ENCODE measurements at regions of chr1 and their contacts with region 1.

Region 1: GRCh38 chr1:205711104-205712020 is 31.1 kb upstream of the SLC45A3 start:
- DNase-seq: peak; percentile 93
- H3K4me3 Mint-ChIP-seq: no peak overlapping the region
- H3K27ac Mint-ChIP-seq: no peak overlapping the region
- H3K4me1 Mint-ChIP-seq: peaks cover 30% of the 10 kb centered on the region
- H3K27me3 Mint-ChIP-seq: no peaks in the 10 kb centered on the region
- CTCF ChIP-seq: peak; percentile 97

Region 2: DNA sequence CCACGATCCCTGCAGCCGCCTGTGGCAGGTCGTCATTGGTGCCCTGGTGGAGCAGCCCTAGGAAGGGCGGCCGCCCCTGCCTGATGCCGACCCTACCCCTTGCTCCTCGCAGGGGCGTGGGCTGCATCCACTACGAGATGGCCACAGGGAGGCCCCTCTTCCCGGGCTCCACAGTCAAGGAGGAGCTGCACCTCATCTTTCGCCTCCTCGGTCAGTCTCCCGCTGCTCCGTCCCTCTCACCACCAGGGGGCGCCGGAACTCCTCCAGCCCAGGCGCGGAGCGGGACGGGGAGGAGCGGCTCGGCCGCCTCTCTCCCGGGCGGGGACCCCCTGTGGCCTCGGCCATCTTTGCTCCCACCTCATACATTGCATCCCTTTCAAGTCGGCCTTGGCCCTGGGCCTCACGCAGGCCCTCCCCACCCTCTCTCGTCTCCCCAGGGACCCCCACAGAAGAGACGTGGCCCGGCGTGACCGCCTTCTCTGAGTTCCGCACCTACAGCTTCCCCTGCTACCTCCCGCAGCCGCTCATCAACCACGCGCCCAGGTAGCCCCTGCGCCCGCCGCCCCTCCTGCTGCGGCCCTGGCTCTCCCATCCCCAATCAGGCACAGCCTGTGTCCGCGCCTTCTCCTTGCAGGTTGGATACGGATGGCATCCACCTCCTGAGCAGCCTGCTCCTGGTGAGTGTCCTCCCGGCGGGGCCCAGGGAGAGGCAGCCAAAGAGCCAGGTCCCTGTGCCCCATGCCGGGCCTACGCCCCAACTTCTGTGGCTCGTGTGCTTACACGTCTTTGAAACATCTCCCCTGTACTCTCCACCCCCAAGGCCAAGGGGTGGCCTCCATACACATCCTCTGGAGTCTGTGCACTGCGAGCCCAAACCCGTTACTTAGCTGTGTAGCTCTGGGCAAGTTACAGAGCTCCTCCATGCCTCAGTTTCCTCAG is 182.2 kb before region 1 on chr1:
- CTCF ChIA-PET with region 1: interaction called, 26 read pairs
- POLR2A ChIA-PET with region 1: no interaction called
- intact Hi-C with region 1: loop called (anchors 2 kb)
- DNase-seq: peak; percentile 89
- H3K4me3 Mint-ChIP-seq: peak overlapping the region; percentile 32
- H3K27ac Mint-ChIP-seq: no peak overlapping the region
- H3K4me1 Mint-ChIP-seq: peaks cover 6% of the 10 kb centered on the region
- H3K27me3 Mint-ChIP-seq: no peaks in the 10 kb centered on the region
- CTCF ChIP-seq: peak; percentile 100

Region 3: GRCh38 chr1:205668951-205669340 is 42.4 kb before region 1 on chr1:
- CTCF ChIA-PET with region 1: interaction called, 592 read pairs
- POLR2A ChIA-PET with region 1: interaction called, 8 read pairs
- intact Hi-C with region 1: no loop called
- DNase-seq: no peak
- H3K4me3 Mint-ChIP-seq: no peak overlapping the region
- H3K27ac Mint-ChIP-seq: no peak overlapping the region
- H3K4me1 Mint-ChIP-seq: peaks cover 28% of the 10 kb centered on the region
- H3K27me3 Mint-ChIP-seq: no peaks in the 10 kb centered on the region
- CTCF ChIP-seq: no peak

Region 4: GRCh38 chr1:205693421-205693991 is 17.9 kb before region 1 on chr1:
- CTCF ChIA-PET with region 1: interaction called, 129 read pairs
- POLR2A ChIA-PET with region 1: interaction called, 6 read pairs
- intact Hi-C with region 1: no loop called
- DNase-seq: no peak
- H3K4me3 Mint-ChIP-seq: no peak overlapping the region
- H3K27ac Mint-ChIP-seq: no peak overlapping the region
- H3K4me1 Mint-ChIP-seq: peaks cover 8% of the 10 kb centered on the region
- H3K27me3 Mint-ChIP-seq: peaks cover 14% of the 10 kb centered on the region
- CTCF ChIP-seq: no peak

Region 5: DNA sequence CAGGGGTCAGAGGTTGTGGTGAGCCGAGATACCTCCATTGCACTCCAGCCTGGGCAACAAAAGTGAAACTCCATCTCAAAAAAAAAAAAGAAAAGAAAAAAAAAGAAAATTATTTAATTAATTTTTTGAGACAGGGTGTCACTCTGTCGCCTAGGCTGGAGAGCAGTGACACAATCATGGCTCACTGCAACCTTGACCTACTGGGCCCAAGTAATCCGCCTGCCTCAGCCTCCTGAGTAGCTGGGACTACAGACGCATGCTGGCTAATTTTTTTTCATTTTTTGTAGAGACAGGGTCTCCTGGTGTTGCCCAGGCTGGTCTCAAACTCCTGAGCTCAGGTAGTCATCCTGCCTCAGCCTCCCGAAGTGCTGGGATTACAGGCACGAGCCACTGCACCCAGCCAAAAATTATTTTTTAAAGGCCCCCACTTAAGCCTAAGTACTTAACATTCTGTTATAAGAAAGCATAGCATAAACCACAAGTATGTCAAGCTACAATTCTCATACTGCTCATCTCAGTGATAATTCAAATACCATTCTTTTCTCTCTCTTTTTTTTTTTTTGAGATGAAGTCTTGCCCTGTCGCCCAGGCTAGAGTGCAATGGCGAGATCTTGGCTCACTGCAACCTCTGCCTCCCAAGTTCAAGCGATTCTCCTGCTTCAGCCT is 18.7 kb after region 1 on chr1:
- CTCF ChIA-PET with region 1: interaction called, 141 read pairs
- POLR2A ChIA-PET with region 1: interaction called, 148 read pairs
- intact Hi-C with region 1: no loop called
- DNase-seq: no peak
- H3K4me3 Mint-ChIP-seq: no peak overlapping the region
- H3K27ac Mint-ChIP-seq: no peak overlapping the region
- H3K4me1 Mint-ChIP-seq: peaks cover 12% of the 10 kb centered on the region
- H3K27me3 Mint-ChIP-seq: no peaks in the 10 kb centered on the region
- CTCF ChIP-seq: no peak

Region 6: GRCh38 chr1:205750138-205751035 is 39.0 kb after region 1 on chr1 and contains the start of gene NUCKS1:
- CTCF ChIA-PET with region 1: interaction called, 11 read pairs
- POLR2A ChIA-PET with region 1: interaction called, 17 read pairs
- intact Hi-C with region 1: no loop called
- DNase-seq: peak; percentile 100
- H3K4me3 Mint-ChIP-seq: peak within 1 kb of the TSS; percentile 80
- H3K27ac Mint-ChIP-seq: peak within 1 kb of the TSS; percentile 96
- H3K4me1 Mint-ChIP-seq: peaks cover 15% of the 10 kb centered on the region
- H3K27me3 Mint-ChIP-seq: peaks cover 1% of the 10 kb centered on the region
- CTCF ChIP-seq: no peak
- total RNA-seq, gene NUCKS1: 605 and 615 TPM in 2 replicates

Region 7: DNA sequence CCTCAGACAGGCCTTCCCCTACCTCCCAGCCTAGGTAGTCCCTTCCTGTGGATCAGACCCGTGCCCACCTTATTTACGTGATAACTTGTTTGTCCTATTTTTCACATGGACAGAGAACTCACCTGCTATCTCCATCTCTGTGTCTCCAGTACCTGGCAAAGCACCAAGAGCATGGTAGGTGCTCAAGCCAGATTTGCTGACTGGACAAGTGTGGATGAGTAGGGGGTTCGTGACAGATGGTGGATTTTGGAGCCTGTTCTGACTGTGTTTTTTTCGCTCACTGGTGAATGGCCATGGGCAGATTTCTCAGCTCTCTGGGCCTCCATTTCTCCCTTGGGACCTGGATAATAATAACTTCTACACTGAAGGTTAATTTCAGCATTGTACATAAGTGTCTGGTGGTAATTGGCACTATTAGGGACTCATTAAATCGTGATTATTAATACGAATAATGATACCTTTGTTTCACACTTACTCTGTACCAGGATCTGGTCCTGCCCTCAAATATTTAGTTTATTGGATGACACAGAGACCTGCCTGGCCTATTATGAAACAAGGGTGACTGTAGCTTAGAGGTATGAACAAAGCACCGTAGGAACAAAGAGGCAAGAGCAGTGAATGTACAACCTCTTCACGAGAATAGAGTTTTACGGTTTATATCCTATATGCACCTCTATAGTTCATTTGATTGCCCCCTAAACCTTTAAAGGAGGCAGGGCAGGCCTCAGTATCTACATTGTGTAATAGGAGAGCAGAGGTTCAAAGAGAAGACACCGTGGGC is 256.4 kb after region 1 on chr1:
- CTCF ChIA-PET with region 1: no interaction called
- POLR2A ChIA-PET with region 1: no interaction called
- intact Hi-C with region 1: no loop called
- DNase-seq: peak; percentile 67
- H3K4me3 Mint-ChIP-seq: no peak overlapping the region
- H3K27ac Mint-ChIP-seq: no peak overlapping the region
- H3K4me1 Mint-ChIP-seq: peaks cover 29% of the 10 kb centered on the region
- H3K27me3 Mint-ChIP-seq: peaks cover 5% of the 10 kb centered on the region
- CTCF ChIP-seq: no peak